ENCODE measurements at regions of chr7 and their contacts with region 1.

Region 1: GRCh38 chr7:149261829-149262617 is at the start of gene ZNF783:
- DNase-seq: peak; percentile 91 to 94
- ATAC-seq: peak; percentile 90 to 96 (median 94)
- H3K4me3 ChIP-seq: peak within 1 kb of the TSS; percentile 82
- H3K27ac ChIP-seq: peak within 1 kb of the TSS; percentile 93
- H3K4me1 ChIP-seq: peaks cover 5% of the 10 kb centered on the region
- H3K27me3 ChIP-seq: no peaks in the 10 kb centered on the region
- CTCF ChIP-seq: peak; percentile 87
- total RNA-seq, gene ZNF783: 6.0 to 9.0 (median 7.2) TPM

Region 2: DNA sequence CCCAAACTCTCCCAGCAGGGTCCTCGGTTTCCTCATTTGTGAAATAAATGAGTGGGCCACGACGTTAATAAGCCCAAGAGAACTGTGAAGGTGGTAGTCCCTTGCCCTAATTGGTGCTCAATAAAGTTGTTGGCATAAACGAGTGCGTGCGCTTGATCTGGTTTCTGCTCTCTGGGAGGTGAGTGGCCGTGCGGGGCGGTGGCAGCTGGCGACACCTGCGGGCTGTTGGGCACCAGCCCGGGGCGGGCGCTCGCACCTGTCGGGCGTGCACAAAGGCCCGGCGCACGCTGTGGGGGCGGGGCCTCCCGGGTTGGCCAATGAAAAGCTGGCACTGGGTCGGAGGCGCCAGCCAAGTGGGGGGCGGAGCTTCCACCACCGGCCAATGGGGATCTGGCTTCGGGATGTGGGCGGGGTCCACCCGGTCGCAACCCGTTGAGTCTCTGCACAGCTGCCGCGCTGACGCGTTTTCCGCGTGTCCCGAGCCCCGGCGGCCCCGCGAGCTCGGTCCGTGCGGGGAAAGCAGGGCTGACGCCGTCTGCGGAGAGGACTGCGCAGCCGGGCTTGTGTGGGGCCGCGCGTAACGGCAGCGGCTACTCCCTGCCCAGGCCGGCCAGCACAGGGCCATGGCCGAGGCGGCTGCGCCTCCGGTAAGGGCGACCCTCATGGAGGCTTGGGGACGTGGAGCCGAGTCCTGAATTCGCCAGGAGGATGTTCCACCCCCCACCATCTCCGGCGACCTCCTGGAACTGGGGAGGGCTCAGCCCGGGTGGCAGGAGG is 23.0 kb after region 1 on chr7:
- intact Hi-C with region 1: loop called in 1 of 2 experiments (anchors 1 kb)
- DNase-seq: peak; percentile 95 to 98
- ATAC-seq: peak; percentile 98 to 99 (median 99)
- H3K4me3 ChIP-seq: peak overlapping the region; percentile 74
- H3K27ac ChIP-seq: peak overlapping the region; percentile 81
- H3K4me1 ChIP-seq: peaks cover 4% of the 10 kb centered on the region
- H3K27me3 ChIP-seq: no peaks in the 10 kb centered on the region
- CTCF ChIP-seq: no peak

Region 3: GRCh38 chr7:149381245-149381644 is 119.2 kb after region 1 on chr7:
- intact Hi-C with region 1: no loop called
- DNase-seq: no peak
- ATAC-seq: no peak
- H3K4me3 ChIP-seq: no peak overlapping the region
- H3K27ac ChIP-seq: no peak overlapping the region
- H3K4me1 ChIP-seq: no peaks in the 10 kb centered on the region
- H3K27me3 ChIP-seq: peaks cover 0 to 2% (median 0%) of the 10 kb centered on the region in 3 donors
- CTCF ChIP-seq: no peak

Measured in psoas muscle (tissue), 8 donors.